H1 (cell line): ENCODE measurements at regions of chr11 and their contacts with region 1.

Region 1: DNA sequence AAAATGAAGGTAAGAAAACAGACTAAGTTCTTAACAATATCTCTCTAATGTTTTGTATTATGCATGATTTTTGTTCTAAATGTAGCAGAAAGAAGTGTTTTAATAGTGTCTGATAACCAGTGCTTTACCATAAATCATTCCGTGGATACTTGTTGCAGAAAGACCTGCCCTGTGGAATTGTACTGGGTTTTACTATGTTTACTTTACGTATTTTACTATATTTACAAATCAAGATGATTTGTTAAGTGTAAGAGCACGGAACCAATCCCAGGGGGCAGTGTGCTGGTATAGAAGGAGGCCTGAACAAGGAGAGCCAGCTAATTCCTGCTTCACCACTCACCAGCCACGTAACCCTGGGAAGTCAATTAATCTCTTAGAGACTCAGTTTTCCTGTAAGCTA is 1.4 kb downstream of the HTR3B start:
- DNase-seq: no peak
- H3K4me3 ChIP-seq: no peak overlapping the region
- H3K27ac ChIP-seq: no peak overlapping the region
- H3K4me1 ChIP-seq: peaks cover 0 to 9% (median 3%) of the 10 kb centered on the region in 4 experiments; a peak in 1 of 7 replicates
- H3K27me3 ChIP-seq: no peaks in the 10 kb centered on the region
- CTCF ChIP-seq: peak; percentile 40 to 60 (median 51)
- EP300 ChIP-seq: no peak
- POLR2A ChIP-seq: no peak
- RAD21 ChIP-seq: peak; percentile 44 to 62

Region 2: GRCh38 chr11:113952588-113952987 is 46.5 kb after region 1 on chr11:
- CTCF ChIA-PET with region 1: interaction called, 10 read pairs
- POLR2A ChIA-PET with region 1: interaction called, 3 read pairs
- DNase-seq: no peak
- H3K4me3 ChIP-seq: no peak overlapping the region
- H3K27ac ChIP-seq: no peak overlapping the region
- H3K4me1 ChIP-seq: peaks cover 2 to 11% (median 6%) of the 10 kb centered on the region in 4 experiments
- H3K27me3 ChIP-seq: peaks cover 0 to 2% (median 0%) of the 10 kb centered on the region in 4 experiments; a peak in 2 of 7 replicates
- CTCF ChIP-seq: no peak
- EP300 ChIP-seq: no peak
- POLR2A ChIP-seq: no peak
- RAD21 ChIP-seq: no peak

Region 3: GRCh38 chr11:113974741-113975470 is 68.9 kb after region 1 on chr11 and contains the start of gene HTR3A:
- CTCF ChIA-PET with region 1: interaction called, 13 read pairs
- POLR2A ChIA-PET with region 1: no interaction called
- DNase-seq: peak; percentile 43 to 76
- H3K4me3 ChIP-seq: peak within 1 kb of the TSS in 1 of 4 experiments; percentile 26; a peak in 3 of 8 replicates
- H3K27ac ChIP-seq: no peak within 1 kb of the TSS
- H3K4me1 ChIP-seq: peaks cover 0 to 14% (median 13%) of the 10 kb centered on the region in 4 experiments; a peak in 6 of 7 replicates
- H3K27me3 ChIP-seq: peaks cover 0 to 3% (median 0%) of the 10 kb centered on the region in 4 experiments; a peak in 1 of 7 replicates
- CTCF ChIP-seq: peak in 1 of 3 experiments; percentile 32; a peak in 1 of 4 replicates
- EP300 ChIP-seq: no peak
- POLR2A ChIP-seq: no peak
- RAD21 ChIP-seq: no peak; a peak in 1 of 4 replicates
- total RNA-seq, gene HTR3A: 6.5 and 7.5 TPM in 2 replicates

Region 4: GRCh38 chr11:114068327-114068726 is 162.3 kb after region 1 on chr11:
- CTCF ChIA-PET with region 1: no interaction called
- POLR2A ChIA-PET with region 1: no interaction called
- DNase-seq: no peak
- H3K4me3 ChIP-seq: no peak overlapping the region
- H3K27ac ChIP-seq: no peak overlapping the region
- H3K4me1 ChIP-seq: no peaks in the 10 kb centered on the region
- H3K27me3 ChIP-seq: peaks cover under 1 to 18% (median 15%) of the 10 kb centered on the region in 4 experiments; a peak in 6 of 7 replicates
- CTCF ChIP-seq: no peak
- EP300 ChIP-seq: no peak
- POLR2A ChIP-seq: no peak
- RAD21 ChIP-seq: no peak